Dorsolateral prefrontal cortex (tissue), 120 donors: ENCODE measurements at regions of chr19 and their contacts with region 1.

Region 1: DNA sequence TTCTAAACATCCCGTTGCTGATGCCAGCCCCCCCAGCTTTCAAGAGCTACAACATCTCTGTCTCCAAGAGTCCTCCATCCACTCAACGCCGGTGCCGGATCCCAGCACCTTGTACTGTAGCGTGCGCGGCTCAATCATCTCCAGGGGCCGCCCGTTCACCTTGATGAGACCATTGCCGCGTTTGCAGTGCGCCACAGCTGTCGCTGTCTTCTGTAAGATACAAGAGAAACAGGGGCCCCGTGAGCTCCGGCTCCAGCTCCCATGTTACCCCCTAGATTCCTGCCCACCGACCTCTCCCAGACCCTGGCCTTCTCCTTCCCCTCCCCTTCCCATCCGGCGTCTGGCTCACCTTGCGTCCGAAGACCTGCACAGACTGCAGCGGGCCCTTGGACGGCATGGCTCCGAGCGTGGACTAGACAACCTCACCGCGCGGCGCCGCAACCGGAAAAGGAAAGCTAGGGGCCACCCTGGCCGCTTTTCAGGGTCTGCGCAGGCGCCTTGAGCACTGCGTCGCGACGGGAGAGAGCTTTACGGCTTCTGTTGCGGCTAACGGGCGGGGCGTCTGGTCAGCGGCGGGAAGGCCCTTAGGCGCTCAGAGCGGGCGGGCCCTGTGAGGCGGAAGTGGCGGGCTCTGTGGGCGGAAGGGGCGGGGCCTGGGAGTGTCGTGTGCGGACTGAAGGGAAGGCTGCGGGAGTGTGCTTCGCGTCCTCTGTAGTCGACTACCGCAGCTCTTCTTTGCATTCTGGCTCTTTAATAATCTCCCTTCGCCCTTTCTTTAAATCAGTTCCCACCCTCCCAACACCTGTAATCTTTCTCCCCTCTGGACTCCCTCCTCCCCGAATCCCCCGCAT is at the start of gene RPS16:
- DNase-seq: peak; percentile 97 to 100 (median 98)
- H3K4me3 ChIP-seq: peak within 1 kb of the TSS; percentile 62 to 100 (median 95)
- H3K27ac ChIP-seq: peak within 1 kb of the TSS in 57 of 59 donors; percentile 22 to 93 (median 83)
- H3K27me3 ChIP-seq: no peaks in the 10 kb centered on the region
- CTCF ChIP-seq: peak in 46 of 56 donors; percentile 12 to 71 (median 45)
- total RNA-seq, gene RPS16: 365 to 780 (median 506) TPM

Region 2: GRCh38 chr19:39264306-39265290 is 171.1 kb before region 1 on chr19:
- intact Hi-C with region 1: no loop called
- DNase-seq: peak in 2 of 10 donors; percentile 14 to 30
- H3K4me3 ChIP-seq: peak overlapping the region in 17 of 59 donors; percentile 2 to 42 (median 14)
- H3K27ac ChIP-seq: no peak overlapping the region
- H3K27me3 ChIP-seq: peaks cover 2 to 70% (median 55%) of the 10 kb centered on the region in 45 donors
- CTCF ChIP-seq: no peak

Region 3: DNA sequence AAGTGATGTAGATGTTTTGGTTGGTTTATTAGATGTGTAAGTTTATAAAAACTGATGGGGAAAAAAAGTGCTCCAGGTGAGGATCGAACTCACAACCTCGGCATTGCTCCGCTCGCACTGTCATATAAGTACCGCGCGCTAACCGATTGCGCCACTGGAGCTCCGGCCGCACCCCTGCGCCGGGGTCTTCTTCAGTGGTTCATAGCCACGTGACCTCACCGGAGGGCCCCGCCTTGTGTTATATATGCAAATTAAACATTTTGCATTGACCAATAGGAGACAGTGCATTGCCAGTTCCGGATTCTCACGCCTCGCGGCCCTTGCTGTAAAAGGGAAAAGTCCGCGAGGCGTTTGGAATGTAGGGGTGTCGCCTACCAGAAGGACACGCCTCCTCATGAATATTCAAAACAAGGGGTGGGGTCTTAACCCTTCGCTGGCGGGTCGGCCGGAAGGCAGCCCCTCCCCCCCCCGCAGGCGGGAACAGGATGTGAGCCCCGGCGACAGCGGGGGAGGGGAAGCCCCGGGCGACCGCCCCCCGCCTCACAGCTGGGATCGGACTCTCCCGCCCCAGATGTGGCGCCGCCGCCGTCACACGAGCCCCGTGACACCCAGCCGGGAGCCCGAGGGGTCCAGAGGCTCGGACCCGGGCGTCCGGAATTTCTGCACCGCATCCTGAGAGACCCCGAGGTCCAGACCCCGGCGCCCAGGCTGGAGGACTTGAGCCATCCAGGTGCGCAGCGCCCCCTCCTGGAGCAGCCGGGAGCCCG is 23.4 kb before region 1 on chr19 and contains the start of gene PLEKHG2:
- intact Hi-C with region 1: loop called in 1 of 2 experiments (anchors 2 kb)
- DNase-seq: peak; percentile 91 to 99 (median 97)
- H3K4me3 ChIP-seq: peak within 1 kb of the TSS; percentile 60 to 96 (median 83)
- H3K27ac ChIP-seq: peak within 1 kb of the TSS; percentile 42 to 98 (median 93)
- H3K27me3 ChIP-seq: peaks cover 0 to 10% (median 0%) of the 10 kb centered on the region in 45 donors
- CTCF ChIP-seq: peak in 51 of 56 donors; percentile 4 to 90 (median 77)
- total RNA-seq, gene PLEKHG2: 2.1 to 25.5 (median 9.2) TPM

Region 4: DNA sequence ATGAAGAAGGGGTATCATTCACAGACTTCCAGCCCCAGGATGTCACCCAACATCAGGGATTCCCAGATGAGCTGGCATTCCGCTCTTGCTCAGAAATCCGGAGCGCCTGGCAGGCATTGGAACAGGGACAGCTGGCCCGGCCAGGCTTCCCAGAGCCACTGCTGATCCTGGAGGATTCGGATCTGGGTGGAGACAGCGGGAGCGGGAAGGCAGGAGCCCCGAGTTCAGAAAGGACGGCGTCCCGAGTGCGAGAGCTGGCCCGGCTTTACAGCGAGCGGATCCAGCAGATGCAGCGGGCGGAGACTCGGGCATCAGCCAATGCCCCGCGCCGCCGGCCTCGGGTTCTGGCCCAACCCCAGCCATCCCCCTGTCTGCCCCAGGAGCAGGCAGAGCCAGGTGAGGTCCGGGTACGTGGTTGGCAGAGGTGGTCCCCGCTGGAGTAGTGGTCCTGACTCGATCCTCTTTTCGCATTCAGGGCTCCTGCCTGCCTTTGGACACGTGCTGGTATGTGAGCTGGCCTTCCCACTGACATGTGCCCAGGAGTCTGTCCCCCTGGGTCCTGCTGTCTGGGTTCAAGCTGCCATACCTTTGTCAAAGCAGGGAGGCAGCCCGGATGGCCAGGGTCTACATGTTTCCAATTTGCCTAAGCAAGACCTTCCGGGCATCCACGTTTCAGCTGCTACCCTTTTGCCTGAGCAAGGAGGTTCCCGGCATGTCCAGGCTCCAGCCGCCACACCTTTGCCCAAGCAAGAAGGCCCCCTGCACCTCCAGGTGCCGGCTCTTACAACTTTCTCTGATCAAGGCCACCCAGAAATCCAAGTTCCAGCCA is 12.3 kb before region 1 on chr19:
- intact Hi-C with region 1: no loop called
- DNase-seq: no peak
- H3K4me3 ChIP-seq: no peak overlapping the region
- H3K27ac ChIP-seq: no peak overlapping the region
- H3K27me3 ChIP-seq: no peaks in the 10 kb centered on the region
- CTCF ChIP-seq: no peak

Region 5: DNA sequence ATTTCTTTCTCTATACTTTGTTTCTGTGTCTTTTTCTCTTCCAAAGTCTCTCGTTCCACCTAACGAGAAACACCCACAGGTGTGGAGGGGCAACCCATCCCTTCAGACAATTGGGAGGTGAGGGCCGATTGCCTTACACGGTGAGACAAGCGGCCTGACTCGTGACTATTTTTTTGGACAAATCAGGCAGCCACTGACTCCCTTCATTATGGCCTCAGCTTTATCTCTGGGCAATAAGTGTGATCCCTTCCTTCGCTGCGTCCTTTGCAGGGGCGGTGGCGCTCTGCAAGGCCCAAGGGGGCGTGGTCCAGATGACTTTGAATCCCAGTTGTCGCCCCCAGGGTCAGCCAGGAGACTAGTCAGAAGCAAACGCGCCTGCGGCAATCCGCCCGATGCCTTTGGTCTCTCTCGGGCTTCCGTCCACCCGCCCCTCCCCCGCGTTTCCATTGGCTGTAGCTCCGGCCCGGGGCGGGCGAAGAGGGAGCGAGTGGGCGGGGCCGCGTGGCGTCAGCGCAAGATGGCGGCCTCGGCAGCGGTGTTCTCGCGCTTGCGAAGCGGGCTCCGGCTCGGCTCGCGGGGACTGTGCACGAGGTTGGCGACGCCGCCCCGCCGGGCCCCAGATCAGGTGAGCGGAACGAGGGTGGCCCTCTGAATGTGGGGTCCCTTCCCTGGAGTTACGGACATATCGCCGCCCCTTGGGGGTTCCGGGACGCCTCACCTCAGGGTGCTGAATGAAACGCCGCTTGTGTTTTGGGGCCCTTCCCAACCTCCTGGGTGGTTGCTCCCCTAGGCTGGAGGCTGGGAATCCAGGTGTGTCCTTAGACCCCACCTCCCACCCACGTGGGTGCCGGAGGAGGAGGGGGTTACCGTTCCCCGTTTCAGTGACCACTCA is 44.9 kb after region 1 on chr19 and contains the start of gene TIMM50:
- intact Hi-C with region 1: no loop called
- DNase-seq: peak; percentile 93 to 97 (median 96)
- H3K4me3 ChIP-seq: peak within 1 kb of the TSS; percentile 71 to 100 (median 97)
- H3K27ac ChIP-seq: peak within 1 kb of the TSS; percentile 2 to 95 (median 87)
- H3K27me3 ChIP-seq: no peaks in the 10 kb centered on the region
- CTCF ChIP-seq: peak in 44 of 56 donors; percentile 11 to 64 (median 38)
- total RNA-seq, gene TIMM50: 62.0 to 99.4 (median 80.0) TPM

Region 6: GRCh38 chr19:39539519-39540332 is 104.0 kb after region 1 on chr19 and contains the start of gene EID2:
- intact Hi-C with region 1: loop called in 1 of 2 experiments (anchors 2 kb)
- DNase-seq: peak; percentile 93 to 97 (median 94)
- H3K4me3 ChIP-seq: peak within 1 kb of the TSS; percentile 53 to 96 (median 83)
- H3K27ac ChIP-seq: peak within 1 kb of the TSS; percentile 75 to 99 (median 94)
- H3K27me3 ChIP-seq: no peaks in the 10 kb centered on the region
- CTCF ChIP-seq: peak; percentile 66 to 99 (median 96)
- total RNA-seq, gene EID2: 12.7 to 42.3 (median 28.5) TPM